T-cell (primary cell): ENCODE measurements at regions of chr12 and their contacts with region 1.

Region 1: DNA sequence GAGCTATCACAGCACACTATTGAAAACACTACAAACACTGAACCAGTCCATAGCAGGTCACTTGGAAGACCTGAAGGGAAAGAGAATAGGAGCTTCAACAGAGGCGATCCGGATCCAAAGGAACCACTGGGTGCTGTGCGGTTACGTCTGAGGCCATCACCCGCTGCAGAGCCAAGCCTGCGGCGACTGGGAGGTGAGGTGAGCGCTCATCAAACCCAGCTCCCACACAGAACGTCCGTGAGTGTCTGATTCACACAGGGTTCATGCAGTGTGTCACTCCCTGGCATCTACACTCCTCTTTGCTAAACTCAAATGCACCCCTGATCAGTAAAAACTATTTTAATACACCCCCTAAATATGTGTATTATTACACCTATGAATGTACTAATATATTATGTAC is 64.1 kb downstream of the TMEM132D start:
- DNase-seq: no peak
- ATAC-seq: no peak
- H3K4me3 ChIP-seq: no peak overlapping the region
- H3K4me3 Mint-ChIP-seq: no peak overlapping the region
- H3K27ac ChIP-seq: no peak overlapping the region
- H3K27ac Mint-ChIP-seq: no peak overlapping the region
- H3K4me1 ChIP-seq: no peaks in the 10 kb centered on the region
- H3K4me1 Mint-ChIP-seq: no peaks in the 10 kb centered on the region
- H3K27me3 ChIP-seq: no peaks in the 10 kb centered on the region
- H3K27me3 Mint-ChIP-seq: no peaks in the 10 kb centered on the region

Region 2: GRCh38 chr12:129854591-129854990 is 14.9 kb after region 1 on chr12:
- CTCF ChIA-PET with region 1: no interaction called
- POLR2A ChIA-PET with region 1: no interaction called
- DNase-seq: no peak
- ATAC-seq: no peak
- H3K4me3 ChIP-seq: no peak overlapping the region
- H3K4me3 Mint-ChIP-seq: no peak overlapping the region
- H3K27ac ChIP-seq: no peak overlapping the region
- H3K27ac Mint-ChIP-seq: no peak overlapping the region
- H3K4me1 ChIP-seq: no peaks in the 10 kb centered on the region
- H3K4me1 Mint-ChIP-seq: no peaks in the 10 kb centered on the region
- H3K27me3 ChIP-seq: peaks cover 0 to 2% of the 10 kb centered on the region in 2 experiments
- H3K27me3 Mint-ChIP-seq: no peaks in the 10 kb centered on the region

Region 3: DNA sequence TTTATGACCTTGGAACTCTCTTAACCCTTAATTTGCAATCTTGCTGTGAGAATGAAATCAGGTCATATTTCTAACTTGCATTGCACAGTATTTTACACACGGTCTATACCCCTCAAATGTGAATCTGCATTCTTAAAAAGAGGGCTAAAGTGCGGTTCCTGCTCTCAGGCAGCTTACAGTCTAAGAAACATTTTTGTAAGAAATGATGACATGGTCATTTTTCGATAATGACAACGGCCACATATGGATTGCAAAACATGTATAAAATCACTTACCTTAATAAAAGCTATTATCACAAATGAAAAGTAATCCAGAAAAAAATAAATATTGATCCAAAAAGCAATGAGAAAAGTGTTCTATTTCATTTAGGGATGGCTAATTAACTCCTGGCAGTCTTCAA is 89.0 kb after region 1 on chr12:
- CTCF ChIA-PET with region 1: no interaction called
- POLR2A ChIA-PET with region 1: interaction called in 1 of 2 experiments, 12 read pairs
- DNase-seq: no peak
- ATAC-seq: no peak
- H3K4me3 ChIP-seq: no peak overlapping the region
- H3K4me3 Mint-ChIP-seq: no peak overlapping the region
- H3K27ac ChIP-seq: no peak overlapping the region
- H3K27ac Mint-ChIP-seq: no peak overlapping the region
- H3K4me1 ChIP-seq: no peaks in the 10 kb centered on the region
- H3K4me1 Mint-ChIP-seq: no peaks in the 10 kb centered on the region
- H3K27me3 ChIP-seq: peaks cover 0 to 4% of the 10 kb centered on the region in 2 experiments
- H3K27me3 Mint-ChIP-seq: no peaks in the 10 kb centered on the region